ENCODE measurements at regions of chr18 and their contacts with region 1.

Region 1: DNA sequence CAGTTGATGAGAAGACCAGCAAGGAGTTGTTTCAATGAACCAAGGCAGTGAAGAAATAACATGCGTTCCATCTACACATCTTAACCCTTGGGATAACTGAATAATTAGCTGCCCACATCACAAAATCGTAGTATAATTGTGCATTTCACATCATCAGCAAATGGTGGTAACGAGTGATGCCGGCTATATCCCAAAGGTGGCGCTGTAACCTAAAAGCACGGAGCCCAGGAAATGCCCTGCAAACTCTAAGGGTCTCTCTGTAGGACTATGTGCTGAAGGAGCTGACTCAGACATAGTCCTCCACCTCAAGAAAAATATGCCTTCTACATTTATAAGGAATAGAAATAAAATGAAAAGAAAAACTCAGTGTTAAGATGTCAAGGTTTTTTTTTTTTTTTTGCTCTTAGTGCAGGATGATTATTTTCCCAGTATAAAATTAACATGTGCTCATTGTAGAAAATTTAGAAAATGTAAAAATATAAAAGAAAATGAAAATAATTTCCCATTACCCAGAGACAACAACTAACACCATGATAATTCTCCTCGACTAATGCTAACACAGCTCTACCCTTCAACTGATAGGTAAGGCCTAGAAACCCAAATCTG is 23.1 kb upstream of the DSG3 start:
- DNase-seq: no peak
- ATAC-seq: peak; percentile 89
- H3K4me3 ChIP-seq: no peak overlapping the region
- H3K27ac ChIP-seq: no peak overlapping the region
- H3K4me1 ChIP-seq: no peaks in the 10 kb centered on the region
- H3K27me3 ChIP-seq: no peaks in the 10 kb centered on the region
- CTCF ChIP-seq: peak; percentile 78 to 86 (median 80)
- EP300 ChIP-seq: no peak
- POLR2A ChIP-seq: no peak
- RAD21 ChIP-seq: peak; percentile 94

Region 2: GRCh38 chr18:31156821-31157777 is 267.4 kb before region 1 on chr18:
- CTCF ChIA-PET with region 1: no interaction called
- POLR2A ChIA-PET with region 1: no interaction called
- RAD21 ChIA-PET with region 1: no interaction called
- SMC1A ChIA-PET with region 1: no interaction called
- in situ Hi-C with region 1: no loop called
- intact Hi-C with region 1: no loop called
- DNase-seq: no peak
- ATAC-seq: no peak
- H3K4me3 ChIP-seq: no peak overlapping the region
- H3K27ac ChIP-seq: no peak overlapping the region
- H3K4me1 ChIP-seq: no peaks in the 10 kb centered on the region
- H3K27me3 ChIP-seq: no peaks in the 10 kb centered on the region
- CTCF ChIP-seq: no peak
- EP300 ChIP-seq: no peak
- POLR2A ChIP-seq: no peak
- RAD21 ChIP-seq: no peak

Region 3: GRCh38 chr18:31438402-31438801 is 13.9 kb after region 1 on chr18:
- CTCF ChIA-PET with region 1: interaction called, 17 read pairs
- POLR2A ChIA-PET with region 1: no interaction called
- RAD21 ChIA-PET with region 1: interaction called, 4 read pairs
- SMC1A ChIA-PET with region 1: interaction called, 12 read pairs
- in situ Hi-C with region 1: no loop called
- intact Hi-C with region 1: no loop called
- DNase-seq: no peak
- ATAC-seq: peak; percentile 84
- H3K4me3 ChIP-seq: no peak overlapping the region
- H3K27ac ChIP-seq: no peak overlapping the region
- H3K4me1 ChIP-seq: no peaks in the 10 kb centered on the region
- H3K27me3 ChIP-seq: no peaks in the 10 kb centered on the region; a peak in 2 of 4 replicates
- CTCF ChIP-seq: no peak
- EP300 ChIP-seq: no peak
- POLR2A ChIP-seq: no peak
- RAD21 ChIP-seq: no peak

Region 4: GRCh38 chr18:31497837-31498573 is 73.5 kb after region 1 on chr18 and contains the start of gene DSG2:
- CTCF ChIA-PET with region 1: interaction called, 10 read pairs
- POLR2A ChIA-PET with region 1: no interaction called
- RAD21 ChIA-PET with region 1: interaction called, 16 read pairs
- SMC1A ChIA-PET with region 1: interaction called, 18 read pairs
- in situ Hi-C with region 1: no loop called
- intact Hi-C with region 1: loop called (anchors 2 kb)
- DNase-seq: no peak
- ATAC-seq: peak; percentile 82
- H3K4me3 ChIP-seq: peak within 1 kb of the TSS; percentile 88
- H3K27ac ChIP-seq: peak within 1 kb of the TSS; percentile 79
- H3K4me1 ChIP-seq: peaks cover 6% of the 10 kb centered on the region
- H3K27me3 ChIP-seq: no peaks in the 10 kb centered on the region
- CTCF ChIP-seq: no peak
- EP300 ChIP-seq: no peak
- POLR2A ChIP-seq: peak; percentile 89
- RAD21 ChIP-seq: no peak
- polyA plus RNA-seq, gene DSG2: 11.7 to 12.7 TPM

Region 5: GRCh38 chr18:31555971-31556747 is 131.7 kb after region 1 on chr18:
- CTCF ChIA-PET with region 1: interaction called, 43 read pairs
- POLR2A ChIA-PET with region 1: no interaction called
- RAD21 ChIA-PET with region 1: interaction called, 11 read pairs
- SMC1A ChIA-PET with region 1: interaction called, 53 read pairs
- in situ Hi-C with region 1: loop called (anchors 10 kb)
- intact Hi-C with region 1: loop called (anchors 2 kb)
- DNase-seq: peak; percentile 39
- ATAC-seq: peak; percentile 88
- H3K4me3 ChIP-seq: no peak overlapping the region
- H3K27ac ChIP-seq: no peak overlapping the region
- H3K4me1 ChIP-seq: no peaks in the 10 kb centered on the region
- H3K27me3 ChIP-seq: no peaks in the 10 kb centered on the region
- CTCF ChIP-seq: peak; percentile 62 to 79 (median 72); a peak in 5 of 6 replicates
- EP300 ChIP-seq: no peak
- POLR2A ChIP-seq: no peak
- RAD21 ChIP-seq: peak; percentile 96

Region 6: GRCh38 chr18:31741097-31741735 is 316.7 kb after region 1 on chr18:
- CTCF ChIA-PET with region 1: interaction called, 15 read pairs
- POLR2A ChIA-PET with region 1: no interaction called
- RAD21 ChIA-PET with region 1: interaction called, 4 read pairs
- SMC1A ChIA-PET with region 1: interaction called, 3 read pairs
- in situ Hi-C with region 1: no loop called
- intact Hi-C with region 1: no loop called
- DNase-seq: peak; percentile 16
- ATAC-seq: peak; percentile 72
- H3K4me3 ChIP-seq: no peak overlapping the region
- H3K27ac ChIP-seq: no peak overlapping the region
- H3K4me1 ChIP-seq: no peaks in the 10 kb centered on the region
- H3K27me3 ChIP-seq: no peaks in the 10 kb centered on the region
- CTCF ChIP-seq: peak; percentile 59 to 77 (median 74)
- EP300 ChIP-seq: no peak
- POLR2A ChIP-seq: no peak
- RAD21 ChIP-seq: peak; percentile 72